Vagina (tissue), 2 donors: ENCODE measurements at regions of chr15 and their contacts with region 1.

Region 1: GRCh38 chr15:38252481-38253412 is at the start of gene SPRED1:
- DNase-seq: no peak
- H3K4me3 ChIP-seq: peak within 1 kb of the TSS; percentile 83 to 91
- H3K27ac ChIP-seq: peak within 1 kb of the TSS; percentile 99
- H3K4me1 ChIP-seq: peaks cover 36% of the 10 kb centered on the region
- H3K27me3 ChIP-seq: no peaks in the 10 kb centered on the region
- CTCF ChIP-seq: no peak
- POLR2A ChIP-seq: no peak
- total RNA-seq, gene SPRED1: 16.7 TPM

Region 2: GRCh38 chr15:38129531-38130204 is 123.1 kb before region 1 on chr15:
- intact Hi-C with region 1: loop called (anchors 2 kb)
- DNase-seq: peak in 1 of 2 donors; percentile 99
- H3K4me3 ChIP-seq: peak overlapping the region; percentile 18 to 21
- H3K27ac ChIP-seq: peak overlapping the region; percentile 72
- H3K4me1 ChIP-seq: peaks cover 30% of the 10 kb centered on the region
- H3K27me3 ChIP-seq: no peaks in the 10 kb centered on the region
- CTCF ChIP-seq: no peak
- POLR2A ChIP-seq: no peak

Region 3: GRCh38 chr15:38894243-38894948 is 641.6 kb after region 1 on chr15:
- intact Hi-C with region 1: loop called (anchors 5 kb)
- DNase-seq: no peak
- H3K4me3 ChIP-seq: no peak overlapping the region
- H3K27ac ChIP-seq: no peak overlapping the region
- H3K4me1 ChIP-seq: peaks cover 12% of the 10 kb centered on the region
- H3K27me3 ChIP-seq: no peaks in the 10 kb centered on the region
- CTCF ChIP-seq: no peak
- POLR2A ChIP-seq: no peak